Right ventricle myocardium inferior (tissue), 1 donor: ENCODE measurements at regions of chr4 and their contacts with region 1.

Region 1: GRCh38 chr4:7206911-7207567 is 14.7 kb downstream of the SORCS2 start:
- DNase-seq: peak; percentile 89
- ATAC-seq: peak; percentile 97

Region 2: DNA sequence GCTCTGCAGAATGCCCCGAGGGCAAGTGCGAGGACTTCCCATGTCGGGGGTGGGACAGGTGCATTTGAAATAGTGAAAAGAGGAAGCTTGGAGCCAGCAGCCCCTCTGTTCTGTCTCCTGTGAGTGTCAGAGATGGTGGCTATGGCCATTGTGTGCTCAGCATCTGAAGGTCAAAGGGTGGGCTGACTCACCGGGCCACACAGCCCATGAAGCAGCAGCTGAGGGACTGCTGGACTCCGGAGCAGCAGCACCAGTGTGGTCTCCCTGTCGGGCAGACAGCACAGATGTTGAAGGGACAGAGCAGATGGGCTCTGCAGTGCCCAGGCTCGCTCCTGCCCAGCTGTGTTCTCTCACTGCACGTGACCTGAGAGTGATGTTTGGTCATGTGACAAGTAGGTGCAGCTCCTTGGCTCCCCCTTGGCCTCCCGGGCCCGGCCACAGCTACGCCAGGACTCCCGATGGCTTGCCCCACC is 243.9 kb before region 1 on chr4:
- intact Hi-C with region 1: no loop called
- DNase-seq: no peak
- ATAC-seq: no peak

Region 3: GRCh38 chr4:7240306-7240705 is 33.3 kb after region 1 on chr4:
- intact Hi-C with region 1: loop called (anchors 5 kb)
- DNase-seq: no peak
- ATAC-seq: no peak

Region 4: DNA sequence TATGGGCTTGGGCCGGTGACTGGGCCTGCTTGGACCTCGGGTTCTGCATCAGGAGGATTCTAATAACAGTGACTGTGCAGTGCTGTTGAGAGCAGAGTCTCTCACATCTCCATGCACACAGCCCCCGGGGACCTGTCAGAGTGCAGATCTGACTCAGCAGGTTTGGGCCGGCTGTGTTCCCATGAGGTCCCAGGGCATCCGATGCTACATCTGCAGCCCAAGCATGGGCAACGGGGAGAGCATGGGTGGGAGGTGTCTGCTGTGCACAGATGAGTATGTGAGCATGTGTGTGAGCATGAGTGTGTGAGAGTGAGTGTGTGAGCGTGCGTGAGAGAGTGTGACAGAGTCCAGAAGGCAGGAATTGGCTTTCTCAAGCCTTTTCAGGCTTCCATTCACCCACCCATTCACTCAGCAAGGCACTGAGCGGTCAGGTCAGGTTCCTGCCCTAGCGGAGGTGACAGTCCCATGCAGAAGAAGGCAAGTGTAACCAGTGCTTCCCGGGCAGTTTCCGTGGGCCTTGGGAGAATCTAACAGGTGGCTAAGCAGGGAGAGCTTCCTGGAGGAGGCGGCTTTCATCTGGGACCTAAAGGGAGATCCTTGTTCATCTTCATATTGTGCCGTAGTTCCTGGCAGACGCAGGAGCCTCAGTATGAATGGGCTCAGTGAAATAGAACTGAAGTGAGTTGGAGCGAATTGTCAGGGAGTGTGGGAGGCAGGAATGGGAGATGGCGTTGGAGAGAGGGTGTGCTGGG is 47.9 kb after region 1 on chr4:
- intact Hi-C with region 1: loop called (anchors 2 kb)
- DNase-seq: no peak
- ATAC-seq: no peak